ENCODE measurements at regions of chr18 and their contacts with region 1.

Region 1: DNA sequence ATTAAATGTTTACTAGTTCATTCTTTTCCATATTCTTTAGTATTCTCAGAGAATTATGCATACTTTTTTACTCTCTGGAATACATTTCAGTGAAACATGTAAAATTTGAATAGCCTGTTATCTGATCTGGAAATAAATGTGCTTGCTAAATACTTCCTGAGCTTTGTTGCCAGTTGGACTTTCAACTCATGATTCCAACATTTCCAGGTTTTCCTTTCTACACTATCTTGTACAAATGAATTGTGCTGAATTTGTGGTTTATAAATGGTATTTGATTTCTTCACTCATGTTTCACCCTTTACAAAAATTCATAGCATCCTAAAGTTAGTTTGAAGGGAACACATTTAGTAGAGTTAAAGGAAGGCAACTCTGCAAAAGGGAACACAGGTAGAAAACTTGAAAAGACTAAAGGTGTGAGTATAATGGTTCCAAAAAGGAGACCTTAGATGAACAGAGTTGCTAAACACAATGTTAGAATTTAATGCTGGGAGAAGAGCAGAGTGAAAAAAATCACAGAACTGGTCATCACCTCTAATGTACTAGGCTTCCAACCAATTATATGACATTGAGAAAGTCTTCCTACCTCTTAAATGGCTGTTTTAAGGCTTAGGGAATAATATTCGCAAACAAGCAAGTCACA is 28.6 kb downstream of the SYT4 start:
- DNase-seq: no peak
- ATAC-seq: no peak
- H3K4me3 ChIP-seq: no peak overlapping the region
- H3K27ac ChIP-seq: no peak overlapping the region
- H3K4me1 ChIP-seq: no peaks in the 10 kb centered on the region
- H3K27me3 ChIP-seq: no peaks in the 10 kb centered on the region
- CTCF ChIP-seq: no peak

Region 2: GRCh38 chr18:43220691-43221090 is 28.0 kb before region 1 on chr18:
- CTCF ChIA-PET with region 1: no interaction called
- POLR2A ChIA-PET with region 1: interaction called, 13 read pairs
- in situ Hi-C with region 1: no loop called
- intact Hi-C with region 1: no loop called
- DNase-seq: no peak
- ATAC-seq: no peak
- H3K4me3 ChIP-seq: no peak overlapping the region
- H3K27ac ChIP-seq: no peak overlapping the region
- H3K4me1 ChIP-seq: no peaks in the 10 kb centered on the region
- H3K27me3 ChIP-seq: no peaks in the 10 kb centered on the region
- CTCF ChIP-seq: no peak

Measured in Panc1 (cell line).